Activated B cell treated with CpG ODN at 0.5 μM for 24 hours (primary cell): ENCODE measurements at regions of chr12 and their contacts with region 1.

Region 1: DNA sequence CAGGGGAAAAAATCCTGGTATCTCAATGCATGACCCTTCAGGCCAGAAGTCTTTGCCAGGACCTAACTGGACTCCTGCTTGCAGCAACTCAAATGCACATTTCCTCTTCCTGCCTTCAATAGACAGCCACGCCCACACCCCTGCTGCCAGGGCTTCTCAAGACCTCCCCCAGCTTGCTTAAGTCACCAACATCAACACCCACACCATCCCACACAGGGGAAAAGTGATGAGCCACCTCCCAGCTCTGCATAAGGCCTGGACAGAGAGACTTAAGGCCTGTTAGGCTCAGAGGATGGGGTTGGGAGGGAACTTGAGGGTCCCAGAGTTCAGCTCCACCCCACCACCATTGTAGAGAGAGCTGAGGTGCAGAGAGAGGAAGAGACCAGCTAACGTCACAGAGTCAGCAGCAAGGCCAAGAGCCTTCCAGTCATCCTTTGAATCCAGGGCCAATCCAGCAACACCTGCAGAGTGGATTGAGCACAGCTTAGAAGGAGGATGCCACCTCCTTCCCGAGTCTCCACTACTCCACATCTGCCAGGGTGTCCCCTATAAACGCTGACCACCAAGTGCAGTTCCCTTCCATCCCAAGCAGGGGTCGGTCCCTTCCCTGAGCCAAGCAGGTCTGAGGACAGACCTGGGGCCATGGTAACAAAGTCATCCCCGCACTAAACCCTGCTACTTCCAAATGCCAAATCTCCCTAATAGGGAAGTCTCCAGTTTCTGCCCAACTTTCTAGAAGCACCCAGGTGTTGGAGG is 50.0 kb downstream of the KDM2B start:
- DNase-seq: peak; percentile 43
- ATAC-seq: peak; percentile 54
- H3K4me3 Mint-ChIP-seq: peak overlapping the region; percentile 91
- H3K27ac Mint-ChIP-seq: peak overlapping the region; percentile 80
- H3K4me1 Mint-ChIP-seq: peaks cover 66% of the 10 kb centered on the region
- H3K27me3 Mint-ChIP-seq: no peaks in the 10 kb centered on the region
- CTCF ChIP-seq: no peak

Region 2: DNA sequence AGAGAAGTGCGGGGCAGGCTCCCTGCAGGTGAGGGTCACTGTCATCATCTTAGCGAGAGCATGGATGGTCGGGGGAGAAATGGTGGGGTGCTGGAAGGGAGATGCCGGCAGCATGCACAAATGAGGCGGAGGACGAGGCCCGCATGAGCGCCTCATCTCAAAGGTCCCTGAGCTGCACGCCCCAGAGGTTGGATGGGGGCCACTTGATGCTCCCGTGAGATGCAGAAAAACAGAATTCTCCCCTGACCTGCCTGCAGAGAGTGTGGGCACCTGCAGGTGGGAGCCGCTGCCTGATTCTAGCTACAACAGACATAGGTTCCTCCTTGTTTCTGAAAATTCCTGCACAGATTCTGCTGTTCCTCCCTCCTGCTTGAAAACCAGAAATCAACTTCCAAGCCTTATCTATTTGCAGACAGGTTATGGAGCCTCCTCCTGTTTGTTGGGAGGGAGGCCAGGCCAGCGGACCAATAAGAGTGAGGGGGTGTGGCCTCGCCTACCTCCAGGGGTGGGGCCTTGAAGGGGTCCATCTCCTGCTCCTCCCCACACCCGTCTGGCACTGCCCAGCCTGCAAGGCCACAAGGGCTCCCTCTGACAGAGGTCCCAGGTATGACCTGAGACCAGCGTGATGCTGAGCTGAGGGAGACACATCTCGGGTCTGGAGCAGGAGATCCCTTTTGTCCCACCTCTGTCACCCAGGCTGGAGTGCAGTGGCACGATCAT is 17.2 kb before region 1 on chr12:
- CTCF ChIA-PET with region 1: no interaction called
- POLR2A ChIA-PET with region 1: interaction called, 19 read pairs
- intact Hi-C with region 1: no loop called
- DNase-seq: no peak
- ATAC-seq: peak; percentile 57
- H3K4me3 Mint-ChIP-seq: peak overlapping the region; percentile 35
- H3K27ac Mint-ChIP-seq: peak overlapping the region; percentile 86
- H3K4me1 Mint-ChIP-seq: peaks cover 23% of the 10 kb centered on the region
- H3K27me3 Mint-ChIP-seq: no peaks in the 10 kb centered on the region
- CTCF ChIP-seq: no peak

Region 3: DNA sequence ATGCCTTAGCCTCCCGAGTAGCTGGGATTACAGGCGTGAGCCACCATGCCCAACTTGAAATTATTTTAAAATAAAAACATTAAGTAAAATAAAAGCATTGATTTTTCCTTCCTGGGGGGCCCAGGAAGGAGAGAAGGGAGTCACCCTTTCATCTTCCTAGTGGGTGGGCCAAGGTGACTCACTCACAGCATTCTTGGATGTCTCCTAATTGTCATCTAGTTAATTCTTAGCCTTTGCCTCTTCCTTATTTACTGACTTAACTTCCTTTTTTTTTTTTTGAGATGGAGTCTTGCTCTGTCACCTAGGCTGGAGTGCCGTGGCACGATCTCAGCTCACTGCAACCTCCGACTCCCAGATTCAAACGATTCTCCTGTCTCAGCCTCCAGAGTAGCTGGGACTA is 211.0 kb after region 1 on chr12:
- CTCF ChIA-PET with region 1: no interaction called
- POLR2A ChIA-PET with region 1: no interaction called
- intact Hi-C with region 1: no loop called
- DNase-seq: no peak
- ATAC-seq: no peak
- H3K4me3 Mint-ChIP-seq: no peak overlapping the region
- H3K27ac Mint-ChIP-seq: no peak overlapping the region
- H3K4me1 Mint-ChIP-seq: no peaks in the 10 kb centered on the region
- H3K27me3 Mint-ChIP-seq: no peaks in the 10 kb centered on the region
- CTCF ChIP-seq: no peak